ENCODE measurements at regions of chr9 and their contacts with region 1.

Region 1: GRCh38 chr9:120868676-120869359 is 8.2 kb downstream of the PHF19 start:
- DNase-seq: peak; percentile 98
- ATAC-seq: peak; percentile 97
- H3K4me3 Mint-ChIP-seq: peak overlapping the region; percentile 82
- H3K27ac Mint-ChIP-seq: peak overlapping the region; percentile 99
- H3K4me1 Mint-ChIP-seq: peaks cover 50% of the 10 kb centered on the region
- H3K27me3 Mint-ChIP-seq: no peaks in the 10 kb centered on the region

Region 2: DNA sequence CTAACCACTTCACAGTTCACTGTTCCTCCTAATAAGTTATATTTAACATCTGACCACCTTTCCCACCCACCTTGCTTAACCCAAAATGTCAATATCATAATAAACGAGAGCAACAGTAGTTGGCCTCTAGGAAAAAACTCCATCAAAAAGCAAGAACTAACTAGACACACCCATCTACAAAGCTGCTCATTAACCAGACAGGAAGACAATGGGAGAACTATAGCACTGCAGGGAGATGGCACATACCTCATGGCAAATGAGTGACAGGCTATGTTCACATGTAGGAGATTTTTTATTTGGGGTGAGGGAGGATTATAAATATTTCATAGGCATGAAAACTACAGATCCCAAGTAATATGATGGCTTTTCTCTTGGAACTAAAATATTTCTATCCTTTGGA is 265.2 kb before region 1 on chr9:
- CTCF ChIA-PET with region 1: no interaction called
- POLR2A ChIA-PET with region 1: no interaction called
- DNase-seq: no peak
- ATAC-seq: no peak
- H3K4me3 Mint-ChIP-seq: no peak overlapping the region
- H3K27ac Mint-ChIP-seq: no peak overlapping the region
- H3K4me1 Mint-ChIP-seq: peaks cover 2% of the 10 kb centered on the region
- H3K27me3 Mint-ChIP-seq: no peaks in the 10 kb centered on the region

Region 3: DNA sequence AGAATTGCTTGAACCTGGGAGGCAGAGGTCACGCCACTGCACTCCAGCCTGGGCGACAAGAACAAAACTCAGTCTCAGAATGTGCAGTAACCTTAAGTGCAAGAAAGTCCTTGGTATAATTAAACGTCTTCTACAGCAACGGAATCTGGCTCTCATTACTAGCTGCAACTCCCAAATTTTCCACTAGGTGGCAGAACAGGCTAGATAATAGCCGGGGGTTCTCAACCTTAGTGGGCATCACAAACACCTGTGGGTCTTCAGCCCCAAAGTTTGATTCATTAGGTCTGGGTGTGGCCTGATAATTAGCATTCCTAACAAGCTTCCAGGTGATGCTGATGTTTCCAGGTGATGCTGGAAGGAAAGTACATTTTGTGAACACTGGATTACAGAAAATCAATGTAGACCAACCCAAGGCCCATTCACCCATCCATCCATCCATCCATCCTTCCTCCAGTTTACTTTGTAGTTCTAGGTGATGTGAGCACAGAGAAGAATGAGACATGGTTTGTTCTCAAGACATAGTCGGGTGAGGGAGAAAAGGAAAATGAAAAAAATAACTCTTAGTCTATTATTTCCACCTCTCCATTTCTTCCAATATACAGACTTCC is 112.9 kb before region 1 on chr9:
- CTCF ChIA-PET with region 1: interaction called, 21 read pairs
- POLR2A ChIA-PET with region 1: no interaction called
- DNase-seq: peak; percentile 77
- ATAC-seq: peak; percentile 76
- H3K4me3 Mint-ChIP-seq: no peak overlapping the region
- H3K27ac Mint-ChIP-seq: no peak overlapping the region
- H3K4me1 Mint-ChIP-seq: peaks cover 15% of the 10 kb centered on the region
- H3K27me3 Mint-ChIP-seq: no peaks in the 10 kb centered on the region

Region 4: DNA sequence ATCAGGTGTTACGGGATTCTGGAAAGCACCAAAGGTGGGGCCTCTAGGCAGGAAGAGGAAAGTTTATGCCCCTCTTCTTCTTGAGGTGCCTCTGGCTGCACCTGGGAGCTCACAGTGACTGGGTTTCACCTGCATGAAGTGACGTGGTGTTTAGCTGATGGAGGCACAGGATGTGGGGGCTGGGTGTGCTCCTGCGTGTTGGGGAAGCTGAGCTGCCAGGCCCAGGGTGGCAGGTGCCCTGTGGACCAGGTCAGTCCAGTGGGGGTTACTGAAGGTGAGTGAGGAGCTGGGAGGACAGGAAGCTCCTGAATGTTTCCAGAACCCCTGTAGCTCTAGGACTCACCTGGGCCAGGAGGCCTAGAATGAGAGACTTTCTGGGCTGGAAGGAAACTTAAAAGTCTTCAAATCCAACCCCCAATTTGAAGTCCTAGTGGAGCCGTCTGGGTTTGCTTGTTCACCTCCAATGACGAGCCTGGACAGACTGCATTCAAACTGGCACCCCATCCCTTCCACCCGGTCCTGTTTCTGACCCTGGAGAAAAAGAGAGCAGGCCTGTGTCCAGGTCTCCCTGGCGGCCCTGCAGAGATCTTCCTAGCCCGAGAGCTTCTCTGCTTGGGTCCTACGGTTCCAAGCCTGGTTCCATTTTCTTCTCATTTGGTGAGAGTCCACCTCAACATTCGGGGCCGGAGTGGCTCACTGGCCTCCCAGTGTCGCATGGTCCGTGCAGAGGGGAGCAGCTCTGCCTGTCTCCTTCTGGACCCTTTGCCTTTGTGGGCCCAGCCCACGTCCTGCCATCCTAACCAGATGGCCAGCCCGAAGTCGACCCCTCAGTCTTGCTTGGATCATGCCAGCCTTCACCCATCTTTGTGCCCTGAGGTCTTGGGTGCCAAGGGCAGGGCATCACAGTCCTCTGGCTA is 35.5 kb after region 1 on chr9:
- CTCF ChIA-PET with region 1: interaction called, 28 read pairs
- POLR2A ChIA-PET with region 1: interaction called, 13 read pairs
- DNase-seq: peak; percentile 69
- ATAC-seq: peak; percentile 55
- H3K4me3 Mint-ChIP-seq: no peak overlapping the region
- H3K27ac Mint-ChIP-seq: peak overlapping the region; percentile 88
- H3K4me1 Mint-ChIP-seq: peaks cover 90% of the 10 kb centered on the region
- H3K27me3 Mint-ChIP-seq: no peaks in the 10 kb centered on the region

Region 5: GRCh38 chr9:120928483-120929228 is 59.8 kb after region 1 on chr9:
- CTCF ChIA-PET with region 1: interaction called, 66 read pairs
- POLR2A ChIA-PET with region 1: interaction called, 344 read pairs
- DNase-seq: peak; percentile 81
- ATAC-seq: peak; percentile 50
- H3K4me3 Mint-ChIP-seq: peak overlapping the region; percentile 90
- H3K27ac Mint-ChIP-seq: peak overlapping the region; percentile 95
- H3K4me1 Mint-ChIP-seq: peaks cover 85% of the 10 kb centered on the region
- H3K27me3 Mint-ChIP-seq: no peaks in the 10 kb centered on the region

Region 6: GRCh38 chr9:121059998-121060636 is 191.3 kb after region 1 on chr9:
- CTCF ChIA-PET with region 1: interaction called, 17 read pairs
- POLR2A ChIA-PET with region 1: no interaction called
- DNase-seq: peak; percentile 42
- ATAC-seq: no peak
- H3K4me3 Mint-ChIP-seq: no peak overlapping the region
- H3K27ac Mint-ChIP-seq: no peak overlapping the region
- H3K4me1 Mint-ChIP-seq: peaks cover 14% of the 10 kb centered on the region
- H3K27me3 Mint-ChIP-seq: peaks cover 5% of the 10 kb centered on the region

Measured in activated CD8-positive, alpha-beta T cell treated with anti-CD3 and anti-CD28 coated beads, Interleukin-2, amount 10 ng/mL, durations not matched to agents 7 days and 5 days (primary cell).